PC-3 (cell line): ENCODE measurements at regions of chr5 and their contacts with region 1.

Region 1: DNA sequence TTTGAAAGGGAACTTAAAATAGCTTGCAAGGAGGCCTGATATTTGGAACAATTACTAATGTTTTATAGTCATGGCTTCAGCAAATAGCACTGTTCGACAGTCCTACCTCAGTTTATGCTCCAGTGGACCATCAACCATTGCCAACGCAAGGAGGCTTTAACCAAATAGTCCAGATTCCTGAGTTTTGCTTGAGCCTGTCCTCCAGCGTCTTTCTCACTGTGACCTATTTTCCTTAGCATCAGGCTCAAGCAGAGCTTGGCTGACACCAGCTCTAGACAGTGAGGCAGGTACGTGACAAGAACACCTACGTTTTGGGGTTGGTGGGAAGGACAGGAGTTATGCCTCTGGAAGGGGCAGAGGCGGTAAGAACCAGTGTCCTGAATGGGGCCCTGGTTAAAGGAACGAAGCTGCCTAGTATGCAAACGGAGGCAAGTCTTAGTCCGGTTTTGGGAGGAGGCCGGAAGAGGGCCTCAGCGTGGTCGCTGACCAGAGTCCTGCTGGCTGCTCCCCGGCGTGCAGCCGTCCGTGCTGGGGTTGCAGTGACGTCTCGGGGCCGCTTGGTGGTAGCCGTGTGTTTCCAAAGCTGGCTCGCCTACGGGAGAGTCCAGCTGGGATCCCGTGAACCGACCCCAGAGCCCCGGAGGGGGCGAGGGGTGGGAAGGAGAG is 998 bp upstream of the FGF18 start:
- DNase-seq: peak; percentile 88
- ATAC-seq: peak; percentile 76
- H3K4me3 ChIP-seq: peak overlapping the region; percentile 61
- H3K27ac ChIP-seq: no peak overlapping the region
- H3K4me1 ChIP-seq: peaks cover 15% of the 10 kb centered on the region
- H3K27me3 ChIP-seq: peaks cover 24% of the 10 kb centered on the region
- CTCF ChIP-seq: peak; percentile 98

Region 2: DNA sequence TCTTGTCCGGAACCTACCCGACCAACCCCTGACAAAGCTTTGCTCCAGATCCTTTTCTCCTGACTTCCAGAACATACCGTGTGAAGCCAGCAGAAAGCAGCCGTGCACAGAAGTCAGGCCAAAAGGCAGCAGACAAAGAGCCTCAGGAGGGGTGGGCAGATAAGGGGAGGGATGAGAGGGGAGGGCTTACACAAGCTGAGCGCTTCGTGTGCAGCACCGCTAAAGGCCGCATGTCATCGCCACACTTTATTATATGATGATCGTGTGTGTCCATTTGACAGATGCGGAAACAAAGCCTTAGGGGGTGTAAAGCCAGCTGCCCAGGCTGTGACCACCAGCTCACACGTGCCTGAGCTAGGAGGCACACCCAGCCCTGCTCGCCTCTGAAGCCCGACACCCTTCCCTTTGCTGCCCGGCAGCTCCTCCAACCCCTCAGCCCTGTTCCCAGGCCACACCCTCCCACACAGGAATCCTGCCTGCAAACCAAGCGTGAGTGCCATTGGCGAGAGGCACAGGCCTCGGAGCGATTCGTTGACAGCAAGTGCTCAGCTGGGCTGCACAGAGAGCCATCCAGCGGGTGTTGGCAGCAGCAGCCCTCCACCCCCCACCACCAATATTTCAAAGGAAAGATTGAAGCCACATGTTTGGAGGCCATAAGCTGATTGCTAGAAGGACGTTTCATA is 196.7 kb after region 1 on chr5:
- CTCF ChIA-PET with region 1: no interaction called
- POLR2A ChIA-PET with region 1: interaction called, 13 read pairs
- intact Hi-C with region 1: no loop called
- DNase-seq: peak; percentile 53
- ATAC-seq: peak; percentile 76
- H3K4me3 ChIP-seq: no peak overlapping the region
- H3K27ac ChIP-seq: no peak overlapping the region
- H3K4me1 ChIP-seq: no peaks in the 10 kb centered on the region
- H3K27me3 ChIP-seq: peaks cover 48% of the 10 kb centered on the region
- CTCF ChIP-seq: no peak

Region 3: DNA sequence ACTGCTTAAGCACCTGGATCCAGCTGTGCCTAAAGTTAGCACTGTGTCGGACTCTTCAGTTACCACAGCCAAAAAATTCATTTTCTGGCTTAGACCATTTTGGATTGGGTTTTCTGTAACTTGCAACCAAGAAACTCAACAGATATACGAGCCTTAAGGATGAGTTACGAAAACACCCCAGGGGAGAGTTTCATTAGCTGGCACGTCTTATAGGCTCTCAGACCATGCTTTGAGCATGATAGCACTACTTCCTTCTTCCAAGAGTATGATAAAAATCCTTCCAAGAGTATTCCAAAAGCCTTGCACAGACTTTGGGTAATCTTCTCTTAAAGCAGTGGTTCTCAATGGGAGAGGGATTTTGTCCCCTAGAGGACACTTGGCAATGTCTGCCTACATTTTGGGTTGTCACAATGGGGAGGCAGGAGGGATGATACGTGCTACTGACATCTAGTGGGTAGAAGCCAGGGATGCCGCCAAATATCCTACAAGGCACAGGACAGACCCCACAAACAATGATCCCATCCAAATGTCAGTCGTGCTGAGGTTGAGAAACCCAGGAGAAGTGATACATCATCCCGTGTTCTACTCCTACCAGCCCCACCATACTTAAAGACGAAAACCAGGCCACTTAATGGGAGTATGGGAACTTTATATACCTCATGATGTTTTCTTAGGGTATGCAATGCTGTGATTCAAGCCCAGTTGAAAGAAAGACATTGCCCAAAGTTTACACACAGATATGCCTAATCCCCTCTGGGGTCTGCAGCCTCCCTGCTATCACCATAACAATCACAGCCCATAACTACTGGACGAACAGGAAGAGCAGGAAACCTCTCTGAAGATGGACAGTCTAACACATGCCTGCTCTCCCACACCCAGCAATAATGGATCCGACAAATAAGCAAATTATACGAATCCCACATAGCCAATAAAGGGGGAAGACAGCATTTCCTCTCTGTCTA is 432.2 kb after region 1 on chr5:
- CTCF ChIA-PET with region 1: no interaction called
- POLR2A ChIA-PET with region 1: no interaction called
- intact Hi-C with region 1: loop called (anchors 2 kb)
- DNase-seq: peak; percentile 59
- ATAC-seq: peak; percentile 71
- H3K4me3 ChIP-seq: no peak overlapping the region
- H3K27ac ChIP-seq: no peak overlapping the region
- H3K4me1 ChIP-seq: no peaks in the 10 kb centered on the region
- H3K27me3 ChIP-seq: no peaks in the 10 kb centered on the region
- CTCF ChIP-seq: peak; percentile 78

Region 4: GRCh38 chr5:172044631-172045314 is 626.3 kb after region 1 on chr5:
- CTCF ChIA-PET with region 1: no interaction called
- POLR2A ChIA-PET with region 1: no interaction called
- intact Hi-C with region 1: loop called (anchors 10 kb)
- DNase-seq: no peak
- ATAC-seq: no peak
- H3K4me3 ChIP-seq: no peak overlapping the region
- H3K27ac ChIP-seq: no peak overlapping the region
- H3K4me1 ChIP-seq: no peaks in the 10 kb centered on the region
- H3K27me3 ChIP-seq: no peaks in the 10 kb centered on the region
- CTCF ChIP-seq: 0 out of 2 replicates have a peak, but pooled peaks have one; percentile 8